Activated T-helper 1 cell treated with anti-CD3 and anti-CD28 coated beads, Interleukin-12 subunit alpha, Interleukin-12 subunit beta, Interleukin-2, Interleukin-4 antibody, amounts not matched to agents 30 ng/mL and 10 ng/mL and 1 ng/mL, durations not matched to agents 14 hours and 24 hours and 36 hours (primary cell): ENCODE measurements at regions of chr2 and their contacts with region 1.

Region 1: GRCh38 chr2:7427293-7428060 is 510.3 kb downstream of the RNF144A start:
- DNase-seq: peak; percentile 36
- H3K4me3 Mint-ChIP-seq: peak overlapping the region; percentile 2
- H3K27ac Mint-ChIP-seq: peak overlapping the region; percentile 69
- H3K4me1 Mint-ChIP-seq: peaks cover 48% of the 10 kb centered on the region
- H3K27me3 Mint-ChIP-seq: peaks cover 3% of the 10 kb centered on the region

Region 2: GRCh38 chr2:7437716-7438632 is 10.5 kb after region 1 on chr2:
- intact Hi-C with region 1: loop called (anchors 1 kb)
- DNase-seq: no peak
- H3K4me3 Mint-ChIP-seq: peak overlapping the region; percentile 54
- H3K27ac Mint-ChIP-seq: peak overlapping the region; percentile 88
- H3K4me1 Mint-ChIP-seq: peaks cover 86% of the 10 kb centered on the region
- H3K27me3 Mint-ChIP-seq: no peaks in the 10 kb centered on the region

Region 3: DNA sequence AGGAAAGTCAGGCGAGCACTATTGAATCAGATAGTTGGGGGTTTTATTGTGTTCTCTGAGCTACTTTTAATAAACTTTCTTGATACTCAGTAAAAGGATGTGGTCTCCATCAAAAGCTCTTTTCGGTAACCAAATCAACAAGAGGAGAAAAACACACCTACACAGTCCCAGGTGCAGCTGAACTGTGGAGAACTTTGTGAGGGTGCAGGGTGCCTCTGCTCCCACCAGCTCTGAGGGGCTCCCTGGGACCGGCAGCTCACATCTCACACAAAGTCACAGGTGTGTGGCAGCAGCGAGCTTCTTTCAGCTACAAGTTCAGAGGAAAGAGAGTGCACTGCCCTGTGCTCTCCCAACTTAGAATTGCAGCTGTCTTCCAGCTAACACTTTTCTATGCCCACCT is 140.2 kb after region 1 on chr2:
- intact Hi-C with region 1: loop called (anchors 1 kb)
- DNase-seq: peak; percentile 47
- H3K4me3 Mint-ChIP-seq: peak overlapping the region; percentile 25
- H3K27ac Mint-ChIP-seq: peak overlapping the region; percentile 90
- H3K4me1 Mint-ChIP-seq: peaks cover 59% of the 10 kb centered on the region
- H3K27me3 Mint-ChIP-seq: no peaks in the 10 kb centered on the region

Region 4: GRCh38 chr2:7692657-7693161 is 265.2 kb after region 1 on chr2:
- intact Hi-C with region 1: loop called (anchors 1 kb)
- DNase-seq: no peak
- H3K4me3 Mint-ChIP-seq: peak overlapping the region; percentile 48
- H3K27ac Mint-ChIP-seq: peak overlapping the region; percentile 94
- H3K4me1 Mint-ChIP-seq: peaks cover 51% of the 10 kb centered on the region
- H3K27me3 Mint-ChIP-seq: no peaks in the 10 kb centered on the region

Region 5: DNA sequence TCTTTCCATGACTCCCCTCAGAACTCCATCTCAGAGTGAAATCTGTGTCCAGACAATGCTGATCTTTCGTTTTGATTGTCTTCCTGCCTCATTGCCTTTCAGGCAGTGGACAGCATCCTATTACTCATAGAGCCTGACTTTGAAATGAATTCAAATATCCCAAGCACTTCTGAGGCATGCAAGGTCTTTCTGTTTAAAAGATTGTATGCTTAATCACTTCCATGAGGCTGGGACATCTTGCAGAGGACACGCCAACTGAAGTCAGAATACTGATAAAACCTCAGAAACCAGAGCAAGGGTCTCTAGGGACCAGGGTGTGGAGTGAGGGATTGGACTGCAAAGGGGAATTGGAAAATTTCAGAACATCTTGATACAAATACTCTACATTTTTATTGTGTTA is 417.9 kb after region 1 on chr2:
- intact Hi-C with region 1: loop called (anchors 2 kb)
- DNase-seq: no peak
- H3K4me3 Mint-ChIP-seq: no peak overlapping the region
- H3K27ac Mint-ChIP-seq: no peak overlapping the region
- H3K4me1 Mint-ChIP-seq: peaks cover 57% of the 10 kb centered on the region
- H3K27me3 Mint-ChIP-seq: no peaks in the 10 kb centered on the region

Region 6: DNA sequence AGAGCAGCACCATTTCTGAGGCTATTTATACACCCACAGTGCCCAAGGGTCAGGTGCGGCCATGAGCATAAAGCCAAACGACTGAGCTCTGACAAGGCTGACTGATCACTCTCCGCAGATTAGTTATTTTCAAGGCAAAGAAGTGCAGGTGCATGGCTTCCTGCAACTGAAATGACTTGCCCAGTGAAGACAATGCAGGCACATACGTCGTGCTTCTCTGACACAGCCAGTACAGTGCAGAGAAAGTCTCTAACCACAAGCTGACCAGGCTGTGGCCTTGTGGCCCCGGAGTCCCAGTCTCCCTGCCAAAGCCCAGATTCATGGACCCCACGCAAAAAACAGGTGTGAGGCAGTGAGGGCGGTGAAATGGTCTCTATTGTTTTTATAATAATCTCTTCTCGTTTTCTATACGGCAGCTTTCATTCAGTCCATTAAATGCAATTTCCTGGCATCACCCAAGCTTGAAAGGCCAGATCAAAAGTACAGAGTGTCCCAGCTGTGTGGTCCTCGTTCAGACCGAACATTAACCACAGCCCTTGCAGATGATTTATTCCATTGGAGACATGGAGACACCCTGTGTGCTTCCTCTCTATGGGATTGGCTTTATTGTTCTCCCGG is 807.4 kb after region 1 on chr2:
- intact Hi-C with region 1: loop called (anchors 2 kb)
- DNase-seq: no peak
- H3K4me3 Mint-ChIP-seq: no peak overlapping the region
- H3K27ac Mint-ChIP-seq: no peak overlapping the region
- H3K4me1 Mint-ChIP-seq: peaks cover 53% of the 10 kb centered on the region
- H3K27me3 Mint-ChIP-seq: peaks cover 9% of the 10 kb centered on the region